Stomach (tissue), 19 donors: ENCODE measurements at regions of chr20 and their contacts with region 1.

Region 1: DNA sequence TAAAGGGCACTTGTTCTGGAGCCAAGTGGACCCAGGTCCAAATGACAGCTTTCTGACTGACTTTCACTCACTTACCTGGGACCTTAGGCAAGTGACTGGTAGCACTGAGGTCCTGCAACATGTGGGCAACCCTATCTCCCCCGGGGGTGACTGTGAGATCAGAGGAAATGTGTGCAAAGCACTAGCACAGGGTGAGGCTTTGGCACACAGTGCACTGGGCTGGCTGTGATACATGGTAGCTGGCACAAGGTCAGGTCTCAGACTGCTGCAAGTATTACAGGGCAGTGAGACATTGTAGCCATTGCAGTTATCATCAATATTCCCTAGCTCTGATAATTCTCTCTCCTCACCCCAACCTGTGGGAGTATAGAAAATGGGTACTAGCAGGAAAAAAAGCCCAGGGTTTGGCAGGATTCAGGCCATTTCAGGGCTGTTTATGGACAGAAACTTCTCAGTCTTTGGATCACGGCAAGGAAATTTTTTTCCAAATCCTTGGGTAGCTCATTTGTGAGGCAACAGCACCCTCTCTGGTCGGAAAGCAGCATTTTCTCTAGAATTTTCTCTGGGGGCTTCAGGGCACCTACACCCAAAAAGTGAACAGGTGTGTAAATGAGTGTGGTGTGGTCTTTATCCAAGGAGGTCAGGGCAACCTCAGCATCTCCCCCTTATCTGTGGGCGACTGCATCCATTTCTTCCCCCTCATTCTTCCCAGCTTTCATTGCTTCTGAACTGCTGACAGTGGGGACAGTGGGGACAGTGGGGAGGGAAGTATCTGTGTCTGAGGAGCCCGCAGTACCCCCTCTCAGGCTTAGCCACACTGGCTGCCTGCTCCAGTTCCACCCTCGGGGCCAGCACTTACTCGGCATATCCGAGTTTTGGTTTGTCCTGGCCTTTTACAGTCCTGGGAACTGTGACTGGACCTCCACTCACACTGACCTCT is 148.7 kb upstream of the PHACTR3 start:
- DNase-seq: peak; percentile 56 to 72
- H3K4me3 ChIP-seq: no peak overlapping the region
- H3K27ac ChIP-seq: no peak overlapping the region
- H3K4me1 ChIP-seq: peaks cover 0 to 9% (median 7%) of the 10 kb centered on the region in 4 donors
- H3K27me3 ChIP-seq: peaks cover 0 to 17% (median 2%) of the 10 kb centered on the region in 3 donors
- CTCF ChIP-seq: peak in 5 of 7 experiments; percentile 9 to 55 (median 49)
- EP300 ChIP-seq: no peak
- POLR2A ChIP-seq: no peak

Region 2: GRCh38 chr20:58870239-58871014 is 585.2 kb before region 1 on chr20:
- intact Hi-C with region 1: loop called (anchors 10 kb)
- DNase-seq: peak; percentile 79 to 89
- H3K4me3 ChIP-seq: no peak overlapping the region
- H3K27ac ChIP-seq: no peak overlapping the region
- H3K4me1 ChIP-seq: peaks cover 0 to 4% (median 0%) of the 10 kb centered on the region in 4 donors
- H3K27me3 ChIP-seq: no peaks in the 10 kb centered on the region
- CTCF ChIP-seq: peak in 5 of 7 experiments; percentile 77 to 85 (median 82)
- EP300 ChIP-seq: no peak
- POLR2A ChIP-seq: no peak

Region 3: GRCh38 chr20:58950603-58951002 is 505.1 kb before region 1 on chr20:
- intact Hi-C with region 1: no loop called
- DNase-seq: no peak
- H3K4me3 ChIP-seq: no peak overlapping the region
- H3K27ac ChIP-seq: no peak overlapping the region
- H3K4me1 ChIP-seq: no peaks in the 10 kb centered on the region
- H3K27me3 ChIP-seq: no peaks in the 10 kb centered on the region
- CTCF ChIP-seq: no peak
- EP300 ChIP-seq: no peak
- POLR2A ChIP-seq: no peak

Region 4: DNA sequence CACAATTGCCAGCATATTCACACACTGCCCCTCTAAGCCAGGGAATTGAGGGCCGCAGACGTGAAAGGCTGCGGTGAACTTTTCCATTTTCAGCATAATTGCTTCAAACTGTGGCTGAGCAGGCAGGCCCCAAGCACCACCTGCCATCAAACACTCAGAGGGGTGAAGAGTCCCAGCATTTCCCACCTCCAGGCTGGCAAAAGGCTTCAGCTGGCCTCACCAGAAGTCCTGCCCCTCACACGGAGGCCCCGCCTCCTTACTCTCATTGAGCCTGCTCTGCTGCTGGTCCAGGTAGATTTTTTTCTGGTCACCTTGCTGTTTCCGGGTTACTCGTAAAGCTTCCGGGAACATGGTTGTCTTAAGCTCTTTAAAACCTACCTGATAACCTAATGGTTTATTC is 361.1 kb before region 1 on chr20:
- intact Hi-C with region 1: loop called (anchors 10 kb)
- DNase-seq: no peak
- H3K4me3 ChIP-seq: no peak overlapping the region
- H3K27ac ChIP-seq: no peak overlapping the region
- H3K4me1 ChIP-seq: no peaks in the 10 kb centered on the region
- H3K27me3 ChIP-seq: no peaks in the 10 kb centered on the region
- CTCF ChIP-seq: no peak
- EP300 ChIP-seq: no peak
- POLR2A ChIP-seq: no peak